Ovary (tissue), 10 donors: ENCODE measurements at regions of chr1 and their contacts with region 1.

Region 1: GRCh38 chr1:45084562-45084961 is 72.5 kb downstream of the UROD start:
- DNase-seq: no peak
- H3K4me3 ChIP-seq: no peak overlapping the region
- H3K27ac ChIP-seq: no peak overlapping the region
- H3K4me1 ChIP-seq: no peaks in the 10 kb centered on the region
- H3K27me3 ChIP-seq: no peaks in the 10 kb centered on the region
- CTCF ChIP-seq: no peak
- EP300 ChIP-seq: no peak
- POLR2A ChIP-seq: no peak

Region 2: GRCh38 chr1:44962729-44963128 is 121.8 kb before region 1 on chr1:
- intact Hi-C with region 1: loop called in 1 of 4 experiments (anchors 10 kb)
- DNase-seq: no peak
- H3K4me3 ChIP-seq: no peak overlapping the region
- H3K27ac ChIP-seq: no peak overlapping the region
- H3K4me1 ChIP-seq: no peaks in the 10 kb centered on the region
- H3K27me3 ChIP-seq: no peaks in the 10 kb centered on the region
- CTCF ChIP-seq: no peak
- EP300 ChIP-seq: no peak
- POLR2A ChIP-seq: no peak

Region 3: GRCh38 chr1:45187725-45188124 is 103.2 kb after region 1 on chr1:
- intact Hi-C with region 1: no loop called
- DNase-seq: no peak
- H3K4me3 ChIP-seq: no peak overlapping the region
- H3K27ac ChIP-seq: no peak overlapping the region
- H3K4me1 ChIP-seq: peaks cover 1% of the 10 kb centered on the region
- H3K27me3 ChIP-seq: no peaks in the 10 kb centered on the region
- CTCF ChIP-seq: no peak
- EP300 ChIP-seq: no peak
- POLR2A ChIP-seq: no peak